OCI-LY7 (cell line): ENCODE measurements at regions of chr19 and their contacts with region 1.

Region 1: DNA sequence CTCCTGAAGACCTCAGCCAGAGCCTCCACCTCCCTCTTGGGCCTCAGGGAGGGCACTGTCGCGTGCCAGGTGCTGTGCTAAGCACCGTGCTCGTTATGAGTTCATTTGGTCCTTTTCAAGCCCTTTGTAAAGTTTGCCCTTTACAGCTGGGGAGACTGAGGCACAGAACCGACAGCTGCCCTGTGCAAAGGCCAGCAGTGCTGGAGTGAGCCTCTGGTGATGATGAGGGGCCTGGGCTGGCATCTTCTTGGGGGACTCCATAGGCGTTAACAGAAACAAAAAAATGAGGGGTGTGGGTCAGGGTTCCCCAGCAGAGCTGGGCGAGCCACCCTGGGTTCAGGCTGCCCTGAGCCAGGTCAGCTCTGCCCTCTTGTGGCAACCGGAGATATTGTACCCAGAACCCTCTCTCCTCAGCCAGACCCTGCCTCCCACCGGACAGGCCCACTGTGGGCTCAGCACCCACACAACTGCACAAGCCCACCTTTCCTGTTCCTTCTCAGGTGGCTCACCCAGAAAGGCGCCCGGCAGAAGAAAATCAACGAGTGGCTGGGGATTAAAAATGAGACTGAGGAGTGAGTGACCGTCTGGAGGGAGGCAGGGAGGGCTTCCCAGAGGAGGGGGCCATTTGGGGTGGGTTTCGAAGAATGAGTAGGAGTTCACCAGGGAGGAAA is 5.5 kb upstream of the IFI30 start:
- DNase-seq: peak; percentile 78
- H3K4me3 ChIP-seq: no peak overlapping the region
- H3K27ac ChIP-seq: peak overlapping the region; percentile 93
- H3K4me1 ChIP-seq: peaks cover 54% of the 10 kb centered on the region
- CTCF ChIP-seq: peak; percentile 90

Region 2: GRCh38 chr19:16910750-16911445 is 1257.2 kb before region 1 on chr19:
- CTCF ChIA-PET with region 1: no interaction called
- POLR2A ChIA-PET with region 1: no interaction called
- intact Hi-C with region 1: no loop called
- DNase-seq: no peak
- H3K4me3 ChIP-seq: no peak overlapping the region
- H3K27ac ChIP-seq: no peak overlapping the region
- H3K4me1 ChIP-seq: no peaks in the 10 kb centered on the region
- CTCF ChIP-seq: 0 out of 2 replicates have a peak, but pooled peaks have one; percentile 12

Region 3: GRCh38 chr19:18007044-18007916 is 160.8 kb before region 1 on chr19:
- CTCF ChIA-PET with region 1: no interaction called
- POLR2A ChIA-PET with region 1: no interaction called
- intact Hi-C with region 1: loop called (anchors 5 kb)
- DNase-seq: peak; percentile 82
- H3K4me3 ChIP-seq: peak overlapping the region; percentile 59
- H3K27ac ChIP-seq: peak overlapping the region; percentile 59
- H3K4me1 ChIP-seq: peaks cover 21% of the 10 kb centered on the region
- CTCF ChIP-seq: peak; percentile 98

Region 4: DNA sequence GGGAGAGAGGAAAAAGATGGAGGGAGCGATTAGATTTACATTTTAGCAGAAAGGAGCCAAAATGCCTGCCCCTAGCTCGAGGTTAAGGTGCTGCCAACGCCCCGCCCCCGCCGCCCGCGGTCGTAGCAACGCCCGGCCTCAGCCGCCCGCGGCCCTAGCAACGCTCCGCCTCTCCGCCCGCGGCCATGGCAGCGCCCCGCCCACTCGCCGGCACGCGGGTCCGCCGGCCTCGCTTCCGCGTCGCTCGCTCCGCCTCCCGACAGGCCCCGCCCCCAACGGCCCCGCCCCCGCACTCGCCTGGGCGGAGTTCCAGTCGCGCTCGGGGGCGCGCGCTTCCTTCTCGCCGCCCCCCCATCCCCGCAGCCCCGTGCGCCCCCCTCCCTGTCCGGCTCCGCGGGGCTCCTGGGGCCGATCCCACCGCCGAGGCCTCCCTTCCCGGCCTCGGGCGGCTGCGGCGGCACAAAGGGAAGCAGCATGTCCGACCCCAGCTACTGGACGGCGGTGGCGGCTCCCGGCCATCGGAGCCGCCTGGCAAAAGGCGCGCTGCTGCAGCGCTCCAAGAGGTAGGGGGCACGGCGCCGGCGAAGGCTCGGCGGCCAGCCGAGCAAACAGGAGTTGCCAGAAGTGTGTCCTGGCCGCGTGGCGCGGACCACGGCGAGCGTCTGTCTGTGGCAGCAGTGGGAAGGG is 50.3 kb before region 1 on chr19:
- CTCF ChIA-PET with region 1: no interaction called
- POLR2A ChIA-PET with region 1: interaction called, 7 read pairs
- intact Hi-C with region 1: loop called (anchors 2 kb)
- DNase-seq: peak; percentile 93
- H3K4me3 ChIP-seq: peak overlapping the region; percentile 73
- H3K27ac ChIP-seq: peak overlapping the region; percentile 70
- H3K4me1 ChIP-seq: peaks cover 35% of the 10 kb centered on the region
- CTCF ChIP-seq: no peak

Region 5: DNA sequence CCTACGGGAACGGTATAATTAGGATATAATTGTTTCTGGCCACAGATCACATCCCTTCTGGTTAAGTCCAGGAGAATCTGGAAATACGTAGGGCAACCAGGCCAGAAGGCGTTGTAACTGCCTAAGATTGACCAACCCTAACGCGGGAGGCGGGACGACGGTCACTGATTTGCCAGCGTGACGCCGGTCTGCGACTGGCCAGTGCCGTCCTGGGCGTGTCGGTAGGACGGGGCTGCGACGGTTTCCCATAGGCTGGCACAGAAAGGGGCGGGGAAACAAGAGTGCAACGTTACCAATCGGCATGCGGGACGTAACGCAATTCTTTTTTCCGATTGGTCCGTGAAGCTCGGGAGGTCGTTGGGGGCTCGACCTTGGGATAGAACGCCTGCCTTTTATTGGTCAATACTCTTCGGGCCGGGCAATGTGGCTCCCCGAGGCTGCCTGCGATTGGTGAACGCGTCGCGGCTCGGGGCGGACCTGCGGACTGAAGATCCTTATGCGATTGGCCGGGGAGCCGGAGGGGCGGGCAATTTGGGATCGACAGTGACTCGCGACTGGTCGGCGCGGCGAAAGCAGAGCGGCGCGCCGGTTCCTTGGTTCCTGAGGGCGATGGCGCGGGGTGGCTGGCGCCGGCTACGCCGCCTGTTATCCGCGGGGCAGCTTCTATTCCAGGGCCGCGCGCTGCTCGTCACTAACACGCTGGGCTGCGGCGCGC is 24.7 kb after region 1 on chr19 and contains the start of gene MPV17L2:
- CTCF ChIA-PET with region 1: interaction called, 3 read pairs
- POLR2A ChIA-PET with region 1: interaction called, 8 read pairs
- intact Hi-C with region 1: loop called (anchors 2 kb)
- DNase-seq: peak; percentile 100
- H3K4me3 ChIP-seq: peak within 1 kb of the TSS; percentile 97
- H3K27ac ChIP-seq: peak within 1 kb of the TSS; percentile 92
- H3K4me1 ChIP-seq: peaks cover 31% of the 10 kb centered on the region
- CTCF ChIP-seq: no peak
- total RNA-seq, gene MPV17L2: 21.9 and 23.7 TPM in 2 replicates